ENCODE measurements at regions of chr10 and their contacts with region 1.

Region 1: GRCh38 chr10:103605359-103606095 is 112.0 kb downstream of the NEURL1 start:
- DNase-seq: peak; percentile 77
- ATAC-seq: peak; percentile 76
- H3K4me3 Mint-ChIP-seq: no peak overlapping the region
- H3K27ac Mint-ChIP-seq: no peak overlapping the region
- H3K4me1 Mint-ChIP-seq: no peaks in the 10 kb centered on the region
- H3K27me3 Mint-ChIP-seq: peaks cover 5% of the 10 kb centered on the region; the same call in 1 of the 2 replicates
- CTCF ChIP-seq: peak; percentile 75

Region 2: DNA sequence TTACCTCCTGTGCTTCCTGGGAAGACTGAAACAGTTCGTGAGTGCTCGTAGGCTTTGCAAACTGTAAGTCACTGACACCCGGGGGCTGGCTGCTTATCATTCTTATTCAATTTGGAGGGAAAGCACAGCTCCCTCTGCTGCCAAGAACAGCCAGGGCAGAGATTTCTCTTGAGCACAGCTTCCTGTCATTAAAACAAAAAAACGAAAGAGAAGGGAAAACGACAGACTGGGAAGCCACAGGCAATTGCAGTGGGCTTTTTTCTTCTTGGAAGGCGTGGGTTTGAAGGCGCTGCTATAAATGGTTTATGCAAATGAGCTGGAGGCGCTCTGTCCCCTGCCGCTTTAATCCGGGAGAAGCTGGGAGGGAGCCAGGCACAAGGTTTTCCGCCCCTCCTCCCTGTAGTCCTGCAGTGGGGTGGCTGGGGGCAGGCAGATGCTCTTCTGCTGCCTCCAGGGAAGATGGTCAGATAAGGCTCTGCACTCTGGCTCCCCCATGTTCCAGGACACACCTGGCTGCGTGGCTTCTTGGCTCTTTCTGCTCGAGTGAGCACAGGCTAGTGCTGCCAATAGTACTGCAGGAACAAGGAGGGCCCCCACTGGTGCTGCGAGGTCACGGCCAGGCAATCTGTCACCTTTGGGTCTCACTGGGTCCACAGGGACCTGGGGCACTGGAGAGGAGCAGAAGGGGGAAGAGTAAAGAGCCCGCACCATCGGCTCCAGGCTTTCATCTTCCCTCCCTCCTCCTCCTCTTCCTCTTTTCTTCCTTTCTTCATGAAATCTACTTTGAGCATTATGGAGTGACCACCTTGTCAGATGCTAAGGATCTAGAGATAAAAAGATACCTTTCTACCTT is 62.5 kb before region 1 on chr10:
- CTCF ChIA-PET with region 1: no interaction called
- POLR2A ChIA-PET with region 1: no interaction called
- DNase-seq: peak; percentile 45
- ATAC-seq: peak; percentile 89
- H3K4me3 Mint-ChIP-seq: peak overlapping the region; percentile 59
- H3K27ac Mint-ChIP-seq: peak overlapping the region; percentile 7
- H3K4me1 Mint-ChIP-seq: peaks cover 16% of the 10 kb centered on the region
- H3K27me3 Mint-ChIP-seq: peaks cover 3% of the 10 kb centered on the region; the same call in 1 of the 2 replicates
- CTCF ChIP-seq: no peak

Region 3: GRCh38 chr10:103554488-103555324 is 50.8 kb before region 1 on chr10:
- CTCF ChIA-PET with region 1: no interaction called
- POLR2A ChIA-PET with region 1: no interaction called
- DNase-seq: peak; percentile 62
- ATAC-seq: peak; percentile 79
- H3K4me3 Mint-ChIP-seq: peak overlapping the region; percentile 71
- H3K27ac Mint-ChIP-seq: no peak overlapping the region
- H3K4me1 Mint-ChIP-seq: 0 out of 2 replicates have a peak, but pooled peaks cover 3% of the 10 kb centered on the region
- H3K27me3 Mint-ChIP-seq: peaks cover 26% of the 10 kb centered on the region
- CTCF ChIP-seq: no peak

Region 4: DNA sequence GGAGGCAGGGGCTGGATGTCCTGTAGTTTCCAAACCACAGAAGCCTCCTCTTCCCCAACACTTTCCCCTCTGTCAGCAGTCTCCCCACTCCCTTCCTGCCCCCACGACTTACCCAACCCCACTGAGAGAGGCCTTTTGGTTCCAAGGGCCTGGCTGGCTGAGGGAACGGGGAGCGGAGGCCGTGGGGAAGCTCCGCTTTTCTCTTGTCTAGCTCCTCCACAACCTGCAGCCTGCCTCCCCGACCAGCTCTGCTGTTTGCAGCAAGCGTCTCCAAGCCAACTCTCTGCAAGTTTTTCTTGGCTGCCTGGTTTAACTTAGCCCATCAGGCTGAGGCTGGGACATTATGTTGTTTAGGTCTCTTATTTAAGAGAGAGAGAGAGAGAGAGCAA is 14.8 kb after region 1 on chr10:
- CTCF ChIA-PET with region 1: interaction called, 13 read pairs
- POLR2A ChIA-PET with region 1: no interaction called
- DNase-seq: no peak
- ATAC-seq: no peak
- H3K4me3 Mint-ChIP-seq: no peak overlapping the region
- H3K27ac Mint-ChIP-seq: peak overlapping the region; percentile 55
- H3K4me1 Mint-ChIP-seq: peaks cover 2% of the 10 kb centered on the region
- H3K27me3 Mint-ChIP-seq: no peaks in the 10 kb centered on the region
- CTCF ChIP-seq: no peak

Region 5: GRCh38 chr10:103637927-103638557 is 32.5 kb after region 1 on chr10:
- CTCF ChIA-PET with region 1: interaction called, 13 read pairs
- POLR2A ChIA-PET with region 1: no interaction called
- DNase-seq: no peak
- ATAC-seq: no peak
- H3K4me3 Mint-ChIP-seq: no peak overlapping the region
- H3K27ac Mint-ChIP-seq: no peak overlapping the region
- H3K4me1 Mint-ChIP-seq: peaks cover 51% of the 10 kb centered on the region
- H3K27me3 Mint-ChIP-seq: no peaks in the 10 kb centered on the region
- CTCF ChIP-seq: no peak

Region 6: GRCh38 chr10:103648921-103649532 is 43.5 kb after region 1 on chr10:
- CTCF ChIA-PET with region 1: interaction called, 17 read pairs
- POLR2A ChIA-PET with region 1: interaction called, 4 read pairs
- DNase-seq: no peak
- ATAC-seq: no peak
- H3K4me3 Mint-ChIP-seq: no peak overlapping the region
- H3K27ac Mint-ChIP-seq: peak overlapping the region; percentile 29; the same call in 1 of the 2 replicates
- H3K4me1 Mint-ChIP-seq: peaks cover 62% of the 10 kb centered on the region
- H3K27me3 Mint-ChIP-seq: no peaks in the 10 kb centered on the region
- CTCF ChIP-seq: no peak

Region 7: DNA sequence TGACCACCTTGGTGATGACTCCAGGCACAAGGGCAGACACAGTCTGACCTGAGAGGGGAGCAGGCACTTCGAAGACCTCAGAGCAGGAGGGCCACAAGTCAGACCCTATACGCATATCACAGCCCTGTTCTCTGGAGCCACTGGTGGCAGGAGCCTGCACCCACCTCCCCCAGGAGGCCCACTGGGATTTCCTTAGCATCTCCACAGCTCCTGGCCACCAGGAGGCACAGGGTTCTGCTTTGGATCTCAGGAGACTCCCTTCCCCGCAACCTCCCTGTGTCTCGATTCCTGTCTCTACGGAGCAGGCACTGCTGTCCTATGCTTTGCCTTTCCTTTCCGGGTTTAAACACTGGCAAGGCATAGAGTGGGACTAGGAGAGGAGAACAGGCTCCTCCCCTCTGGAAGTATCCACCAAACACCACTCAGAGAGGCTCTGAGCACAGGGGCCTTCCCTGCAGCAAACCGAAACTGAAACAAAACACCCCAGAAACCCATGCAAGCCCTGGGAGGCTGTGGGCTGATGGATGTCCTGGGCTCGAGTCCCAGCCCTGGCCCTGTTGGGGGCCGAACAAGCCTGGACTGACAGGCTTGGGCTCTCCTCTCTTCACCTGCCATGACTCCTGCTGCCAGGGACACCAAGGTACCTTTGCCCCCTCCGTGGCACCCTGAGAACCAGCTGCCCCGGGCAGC is 54.3 kb after region 1 on chr10:
- CTCF ChIA-PET with region 1: interaction called, 14 read pairs
- POLR2A ChIA-PET with region 1: no interaction called
- DNase-seq: peak; percentile 23
- ATAC-seq: peak; percentile 47
- H3K4me3 Mint-ChIP-seq: no peak overlapping the region; the same call in 1 of the 2 replicates
- H3K27ac Mint-ChIP-seq: no peak overlapping the region; the same call in 1 of the 2 replicates
- H3K4me1 Mint-ChIP-seq: peaks cover 16% of the 10 kb centered on the region
- H3K27me3 Mint-ChIP-seq: no peaks in the 10 kb centered on the region
- CTCF ChIP-seq: no peak

Region 8: DNA sequence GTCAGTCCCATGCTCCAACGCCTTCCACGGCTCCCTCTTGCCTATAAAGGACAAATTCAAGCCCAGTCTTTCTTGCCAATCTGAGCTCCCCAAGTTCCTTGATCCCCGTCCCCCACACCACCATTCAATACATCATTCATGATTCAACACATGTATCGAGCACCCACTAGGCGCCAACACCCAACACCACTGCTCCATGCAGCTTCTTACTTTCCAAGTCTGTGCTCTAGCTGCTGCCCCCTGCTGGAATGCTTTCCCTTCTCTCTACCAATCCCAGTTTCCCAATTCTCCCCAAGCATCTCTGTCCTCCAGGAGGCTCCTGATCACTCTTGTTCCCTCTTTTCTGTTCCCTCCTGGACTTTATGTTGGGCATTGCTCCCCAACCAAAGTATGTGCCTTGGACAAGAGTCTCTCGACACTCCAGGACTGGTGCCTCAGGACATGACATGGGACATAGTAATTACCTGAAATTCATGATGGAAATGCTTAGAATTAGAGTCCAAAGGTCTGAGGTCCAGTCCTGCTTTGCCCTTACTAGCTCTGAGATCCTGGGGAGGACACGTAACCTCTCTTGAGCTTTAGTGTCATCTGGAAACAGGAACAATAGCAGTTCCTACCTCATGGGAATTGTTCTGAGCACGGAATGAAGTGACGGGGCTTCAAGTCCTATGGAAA is 60.7 kb after region 1 on chr10:
- CTCF ChIA-PET with region 1: interaction called, 22 read pairs
- POLR2A ChIA-PET with region 1: no interaction called
- DNase-seq: peak; percentile 70
- ATAC-seq: peak; percentile 14; the same call in 1 of the 2 replicates
- H3K4me3 Mint-ChIP-seq: no peak overlapping the region
- H3K27ac Mint-ChIP-seq: peak overlapping the region; percentile 73; the same call in 1 of the 2 replicates
- H3K4me1 Mint-ChIP-seq: peaks cover 28% of the 10 kb centered on the region
- H3K27me3 Mint-ChIP-seq: no peaks in the 10 kb centered on the region
- CTCF ChIP-seq: 0 out of 2 replicates have a peak, but pooled peaks have one; percentile 29